Activated B cell treated with CpG ODN at 0.5 μM for 24 hours (primary cell): ENCODE measurements at regions of chr10 and their contacts with region 1.

Region 1: GRCh38 chr10:30493609-30494530 is 59.9 kb downstream of the MAP3K8 start:
- DNase-seq: no peak
- ATAC-seq: peak; percentile 53
- H3K4me3 Mint-ChIP-seq: peak overlapping the region; percentile 70
- H3K27ac Mint-ChIP-seq: peak overlapping the region; percentile 84
- H3K4me1 Mint-ChIP-seq: peaks cover 98% of the 10 kb centered on the region
- H3K27me3 Mint-ChIP-seq: no peaks in the 10 kb centered on the region
- CTCF ChIP-seq: no peak

Region 2: DNA sequence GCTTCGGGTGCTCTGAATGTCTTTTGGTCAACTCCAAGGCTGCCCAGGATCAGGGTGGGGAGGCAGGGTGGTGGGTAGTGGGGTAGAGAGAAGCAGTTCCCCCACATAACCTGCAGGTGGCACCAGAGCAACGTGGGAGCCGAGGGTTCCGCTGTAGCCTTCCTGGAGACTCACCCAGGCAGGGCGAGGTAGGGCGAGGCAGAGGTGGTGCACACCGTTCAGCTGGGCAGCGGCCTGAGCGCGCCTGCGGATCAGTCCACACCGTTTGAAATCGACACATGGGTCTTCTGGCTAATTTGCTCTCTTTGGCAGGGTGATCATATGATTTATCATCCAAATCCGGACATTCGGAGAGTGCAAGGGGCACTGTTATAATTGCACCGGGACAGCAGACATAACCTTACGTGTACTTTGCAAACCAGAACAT is 101.3 kb before region 1 on chr10:
- CTCF ChIA-PET with region 1: no interaction called
- POLR2A ChIA-PET with region 1: no interaction called
- intact Hi-C with region 1: no loop called
- DNase-seq: peak; percentile 70
- ATAC-seq: peak; percentile 100
- H3K4me3 Mint-ChIP-seq: peak overlapping the region; percentile 20
- H3K27ac Mint-ChIP-seq: no peak overlapping the region
- H3K4me1 Mint-ChIP-seq: peaks cover 4% of the 10 kb centered on the region
- H3K27me3 Mint-ChIP-seq: peaks cover 7% of the 10 kb centered on the region
- CTCF ChIP-seq: peak; percentile 34

Region 3: GRCh38 chr10:30456266-30456665 is 37.6 kb before region 1 on chr10:
- CTCF ChIA-PET with region 1: interaction called, 4 read pairs
- POLR2A ChIA-PET with region 1: interaction called, 3 read pairs
- intact Hi-C with region 1: loop called (anchors 5 kb)
- DNase-seq: no peak
- ATAC-seq: peak; percentile 63
- H3K4me3 Mint-ChIP-seq: peak overlapping the region; percentile 53
- H3K27ac Mint-ChIP-seq: peak overlapping the region; percentile 81
- H3K4me1 Mint-ChIP-seq: peaks cover 46% of the 10 kb centered on the region
- H3K27me3 Mint-ChIP-seq: no peaks in the 10 kb centered on the region
- CTCF ChIP-seq: no peak

Region 4: GRCh38 chr10:30467651-30468338 is 26.1 kb before region 1 on chr10:
- CTCF ChIA-PET with region 1: interaction called, 4 read pairs
- POLR2A ChIA-PET with region 1: interaction called, 11 read pairs
- intact Hi-C with region 1: no loop called
- DNase-seq: no peak
- ATAC-seq: peak; percentile 84
- H3K4me3 Mint-ChIP-seq: peak overlapping the region; percentile 56
- H3K27ac Mint-ChIP-seq: peak overlapping the region; percentile 74
- H3K4me1 Mint-ChIP-seq: peaks cover 35% of the 10 kb centered on the region
- H3K27me3 Mint-ChIP-seq: no peaks in the 10 kb centered on the region
- CTCF ChIP-seq: no peak

Region 5: GRCh38 chr10:30510169-30510930 is 16.5 kb after region 1 on chr10:
- CTCF ChIA-PET with region 1: interaction called, 3 read pairs
- POLR2A ChIA-PET with region 1: interaction called, 9 read pairs
- intact Hi-C with region 1: loop called (anchors 1 kb)
- DNase-seq: no peak
- ATAC-seq: peak; percentile 96
- H3K4me3 Mint-ChIP-seq: peak overlapping the region; percentile 56
- H3K27ac Mint-ChIP-seq: peak overlapping the region; percentile 81
- H3K4me1 Mint-ChIP-seq: peaks cover 42% of the 10 kb centered on the region
- H3K27me3 Mint-ChIP-seq: no peaks in the 10 kb centered on the region
- CTCF ChIP-seq: no peak